AG04450 (cell line): ENCODE measurements at regions of chr1 and their contacts with region 1.

Region 1: DNA sequence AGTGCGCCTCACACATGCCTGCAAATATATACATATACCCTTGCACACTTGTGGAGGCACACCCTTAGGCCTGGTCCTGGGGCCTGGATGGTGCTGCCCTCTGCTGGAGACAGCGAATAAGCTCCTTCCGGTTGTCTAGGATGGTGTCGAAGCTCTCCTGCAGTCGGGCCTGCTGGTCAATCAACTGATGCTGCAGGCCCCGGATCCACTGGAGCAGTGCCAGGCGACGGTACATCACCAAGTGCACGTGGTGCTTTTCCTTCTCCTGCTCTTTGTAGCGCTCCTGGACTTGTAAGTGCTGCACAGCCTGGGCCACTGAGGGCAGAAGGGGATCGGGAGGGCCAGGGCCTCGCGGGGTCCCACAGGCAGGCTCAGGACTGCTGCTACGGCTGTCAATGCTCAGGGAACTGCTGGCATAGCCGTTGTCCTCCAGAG is 3.1 kb downstream of the C1orf216 start:
- DNase-seq: peak; percentile 43
- H3K4me3 ChIP-seq: 0 out of 2 replicates have a peak overlapping the region, but pooled peaks have one; percentile 20
- H3K27ac ChIP-seq: no peak overlapping the region
- H3K27me3 ChIP-seq: no peaks in the 10 kb centered on the region
- CTCF ChIP-seq: peak; percentile 87

Region 2: GRCh38 chr1:34711485-34711884 is 1004.1 kb before region 1 on chr1:
- CTCF ChIA-PET with region 1: no interaction called
- POLR2A ChIA-PET with region 1: no interaction called
- DNase-seq: no peak
- H3K4me3 ChIP-seq: no peak overlapping the region
- H3K27ac ChIP-seq: no peak overlapping the region
- H3K27me3 ChIP-seq: no peaks in the 10 kb centered on the region
- CTCF ChIP-seq: no peak

Region 3: DNA sequence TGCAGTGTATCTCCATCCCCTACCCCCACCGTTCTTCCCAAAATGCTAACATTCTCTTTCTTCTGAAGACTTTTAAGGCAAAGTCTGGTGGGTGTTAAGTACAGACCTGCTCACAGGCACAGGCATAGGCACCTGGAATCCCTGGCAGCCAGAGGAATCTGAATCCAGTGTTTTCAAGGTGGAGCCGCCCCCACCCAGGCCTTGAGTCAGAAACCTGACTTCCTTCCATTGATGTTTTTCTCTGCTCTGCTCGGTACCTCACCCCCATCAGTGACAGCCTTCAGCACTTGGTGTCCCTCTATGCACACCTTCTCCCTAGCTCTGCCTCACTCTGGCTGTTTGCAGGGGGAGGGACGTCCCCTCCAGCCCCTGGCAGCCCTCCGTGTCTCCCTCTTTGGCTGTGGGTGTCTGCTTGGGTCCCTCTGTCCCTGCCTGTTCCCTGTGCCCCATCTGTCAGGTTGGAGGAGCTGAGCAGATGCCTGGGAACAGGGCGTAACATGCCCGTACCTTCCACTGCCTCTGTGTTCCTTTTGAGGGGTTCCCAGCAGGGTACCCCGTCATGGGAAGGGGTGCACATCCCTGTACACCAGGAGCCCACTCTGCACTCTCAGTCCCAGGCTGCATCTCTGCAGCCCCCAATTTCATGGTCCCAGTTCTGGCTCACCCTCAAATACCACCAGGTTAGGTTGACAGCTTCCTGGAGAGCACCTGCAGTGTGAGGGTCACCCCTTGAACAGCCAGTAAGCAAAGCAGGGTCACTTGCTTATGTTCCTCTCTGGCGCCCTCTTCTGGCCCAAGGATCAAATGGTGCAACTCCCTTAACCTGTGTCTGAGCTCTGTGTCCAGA is 151.3 kb before region 1 on chr1:
- CTCF ChIA-PET with region 1: interaction called, 66 read pairs
- POLR2A ChIA-PET with region 1: interaction called, 5 read pairs
- DNase-seq: no peak
- H3K4me3 ChIP-seq: no peak overlapping the region
- H3K27ac ChIP-seq: peak overlapping the region; percentile 11
- H3K27me3 ChIP-seq: no peaks in the 10 kb centered on the region
- CTCF ChIP-seq: peak; percentile 83

Region 4: GRCh38 chr1:35637401-35637809 is 78.2 kb before region 1 on chr1:
- CTCF ChIA-PET with region 1: interaction called, 16 read pairs
- POLR2A ChIA-PET with region 1: no interaction called
- DNase-seq: no peak
- H3K4me3 ChIP-seq: peak overlapping the region; percentile 39
- H3K27ac ChIP-seq: no peak overlapping the region
- H3K27me3 ChIP-seq: no peaks in the 10 kb centered on the region
- CTCF ChIP-seq: no peak

Region 5: GRCh38 chr1:35680271-35680670 is 35.3 kb before region 1 on chr1:
- CTCF ChIA-PET with region 1: interaction called, 10 read pairs
- POLR2A ChIA-PET with region 1: no interaction called
- DNase-seq: no peak
- H3K4me3 ChIP-seq: no peak overlapping the region
- H3K27ac ChIP-seq: no peak overlapping the region
- H3K27me3 ChIP-seq: peaks cover 30% of the 10 kb centered on the region
- CTCF ChIP-seq: no peak

Region 6: DNA sequence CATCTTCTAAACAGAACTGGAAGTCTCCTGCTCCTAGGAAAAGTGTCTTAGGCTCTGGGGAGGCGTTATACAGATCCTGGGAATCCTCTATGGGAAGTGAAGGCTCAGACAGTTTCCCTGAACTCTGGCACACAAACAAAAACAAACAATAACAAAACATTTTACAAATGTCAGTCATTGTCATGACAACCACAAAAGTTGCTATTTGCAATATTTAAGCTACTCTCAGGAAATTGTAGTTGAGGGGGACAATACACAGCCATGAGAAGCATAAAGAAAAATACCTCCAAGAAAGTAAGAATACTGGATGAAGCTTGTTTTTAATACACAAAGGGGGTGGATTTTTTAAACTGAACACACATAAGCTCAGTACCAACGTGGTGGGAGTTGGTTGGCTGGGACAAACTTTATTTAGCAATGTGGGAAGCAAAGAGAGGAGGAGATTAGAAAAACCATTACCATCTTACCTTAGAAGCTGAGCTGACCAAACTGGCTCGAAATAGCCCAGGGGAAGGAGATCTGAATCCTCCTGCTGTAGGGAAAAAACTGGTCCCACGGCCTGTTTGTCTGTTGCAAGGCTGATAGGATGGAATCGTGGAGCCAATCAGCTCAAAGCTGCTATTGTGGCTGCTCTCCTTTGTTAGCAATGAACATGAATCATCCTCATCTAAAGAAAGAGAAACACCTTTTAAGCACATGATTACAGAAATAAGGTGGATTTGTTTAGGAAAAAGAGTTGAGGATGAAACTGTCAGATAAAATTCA is 32.5 kb after region 1 on chr1:
- CTCF ChIA-PET with region 1: interaction called, 16 read pairs
- POLR2A ChIA-PET with region 1: no interaction called
- DNase-seq: no peak
- H3K4me3 ChIP-seq: no peak overlapping the region
- H3K27ac ChIP-seq: no peak overlapping the region
- H3K27me3 ChIP-seq: no peaks in the 10 kb centered on the region
- CTCF ChIP-seq: no peak

Region 7: DNA sequence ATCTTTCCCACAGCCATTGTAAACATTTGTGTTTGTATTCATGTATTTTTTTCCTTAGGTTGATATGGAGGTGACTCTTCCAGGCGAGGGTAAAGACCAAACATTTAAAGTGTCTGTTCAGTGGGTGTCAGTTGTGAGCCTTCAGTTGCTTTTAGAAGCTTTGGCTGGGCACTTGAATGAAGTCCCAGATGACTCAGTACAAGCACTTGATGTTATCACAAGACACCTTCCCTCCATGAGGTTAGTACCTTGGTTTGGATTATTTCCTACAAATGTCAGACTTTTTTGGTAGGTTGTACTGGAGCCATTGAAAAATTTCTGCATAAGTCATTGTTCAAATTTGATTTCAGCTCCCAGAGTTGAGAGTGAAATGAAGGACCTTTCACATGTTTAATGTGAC is 109.7 kb after region 1 on chr1:
- CTCF ChIA-PET with region 1: no interaction called
- POLR2A ChIA-PET with region 1: no interaction called
- DNase-seq: no peak
- H3K4me3 ChIP-seq: no peak overlapping the region
- H3K27ac ChIP-seq: no peak overlapping the region
- H3K27me3 ChIP-seq: no peaks in the 10 kb centered on the region
- CTCF ChIP-seq: no peak